GM12878 (cell line): ENCODE measurements at regions of chr2 and their contacts with region 1.

Region 1: DNA sequence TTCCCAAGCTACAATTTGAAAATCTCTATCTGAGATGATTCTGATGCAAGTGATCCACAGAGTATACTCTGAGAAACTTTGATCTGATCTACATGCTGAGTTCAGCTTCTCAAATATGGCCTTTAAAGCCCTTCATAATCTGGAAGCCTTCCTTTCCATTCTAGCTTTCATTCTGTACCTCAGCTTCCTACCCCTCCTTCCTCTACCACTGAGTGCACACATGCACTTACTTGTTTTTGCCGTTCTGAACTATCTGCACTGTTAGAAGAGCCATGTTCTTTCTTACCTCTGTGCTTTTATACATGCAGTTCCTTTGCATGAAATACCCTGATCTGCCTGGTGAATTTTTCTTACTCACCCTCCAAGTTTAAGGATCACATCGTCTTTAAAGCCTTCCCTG is 25.0 kb downstream of the REL start:
- DNase-seq: no peak
- ATAC-seq: peak; percentile 10; the same call in 2 of the 3 replicates
- H3K4me3 ChIP-seq: no peak overlapping the region
- H3K27ac ChIP-seq: no peak overlapping the region
- H3K4me1 ChIP-seq: no peaks in the 10 kb centered on the region
- H3K27me3 ChIP-seq: no peaks in the 10 kb centered on the region
- CTCF ChIP-seq: no peak
- EP300 ChIP-seq: no peak
- POLR2A ChIP-seq: no peak
- RAD21 ChIP-seq: no peak

Region 2: GRCh38 chr2:60936757-60937156 is 30.4 kb after region 1 on chr2:
- CTCF ChIA-PET with region 1: no interaction called
- POLR2A ChIA-PET with region 1: interaction called, 10 read pairs
- RAD21 ChIA-PET with region 1: no interaction called
- SMC1A ChIA-PET with region 1: no interaction called
- in situ Hi-C with region 1: no loop called
- intact Hi-C with region 1: no loop called
- DNase-seq: no peak
- ATAC-seq: no peak
- H3K4me3 ChIP-seq: no peak overlapping the region
- H3K27ac ChIP-seq: no peak overlapping the region
- H3K4me1 ChIP-seq: no peaks in the 10 kb centered on the region
- H3K27me3 ChIP-seq: no peaks in the 10 kb centered on the region
- CTCF ChIP-seq: no peak
- EP300 ChIP-seq: no peak
- POLR2A ChIP-seq: peak; percentile 6; the same call in 1 of the 2 replicates
- RAD21 ChIP-seq: no peak